ENCODE measurements at regions of chr12 and their contacts with region 1.

Region 1: GRCh38 chr12:92363295-92364146 is 217.9 kb upstream of the BTG1 start:
- DNase-seq: no peak
- ATAC-seq: peak; percentile 80

Region 2: DNA sequence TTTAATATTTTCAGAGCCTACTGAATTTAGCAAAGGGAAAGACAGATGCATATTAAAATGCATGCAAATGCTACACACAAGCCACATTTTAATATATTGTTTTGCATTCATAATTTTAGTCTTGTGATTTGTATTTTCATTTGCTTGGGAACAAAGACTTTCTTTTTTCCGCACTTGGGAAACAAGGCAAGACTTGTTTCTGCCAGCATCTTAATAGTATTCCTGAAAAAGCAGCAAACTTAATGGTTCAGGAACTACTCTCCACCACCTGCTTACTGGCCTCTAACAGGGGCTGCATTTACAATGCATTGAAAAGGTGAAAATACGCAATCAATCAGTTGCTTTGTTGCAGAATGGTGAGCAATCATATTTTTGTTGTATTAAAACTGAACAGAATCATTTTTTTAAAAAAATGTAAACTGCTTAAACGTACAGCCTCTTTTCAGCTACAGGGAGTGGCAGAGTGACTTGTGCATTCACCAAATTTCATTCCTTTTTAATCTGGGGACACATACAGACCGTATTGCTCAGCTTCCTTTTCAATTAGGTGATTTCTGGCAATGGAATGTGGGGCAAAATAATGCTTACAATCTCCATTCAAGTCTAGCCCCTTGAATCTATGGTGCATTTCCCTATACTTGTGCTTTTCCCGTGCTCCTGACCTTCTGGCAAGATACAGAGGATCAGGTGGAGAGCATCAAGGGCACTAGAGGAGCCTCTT is 73.7 kb before region 1 on chr12:
- intact Hi-C with region 1: loop called (anchors 5 kb)
- DNase-seq: no peak
- ATAC-seq: no peak

Measured in Right ventricle myocardium inferior (tissue), 1 donor.